Endothelial cell of umbilical vein (primary cell): ENCODE measurements at regions of chr11 and their contacts with region 1.

Region 1: DNA sequence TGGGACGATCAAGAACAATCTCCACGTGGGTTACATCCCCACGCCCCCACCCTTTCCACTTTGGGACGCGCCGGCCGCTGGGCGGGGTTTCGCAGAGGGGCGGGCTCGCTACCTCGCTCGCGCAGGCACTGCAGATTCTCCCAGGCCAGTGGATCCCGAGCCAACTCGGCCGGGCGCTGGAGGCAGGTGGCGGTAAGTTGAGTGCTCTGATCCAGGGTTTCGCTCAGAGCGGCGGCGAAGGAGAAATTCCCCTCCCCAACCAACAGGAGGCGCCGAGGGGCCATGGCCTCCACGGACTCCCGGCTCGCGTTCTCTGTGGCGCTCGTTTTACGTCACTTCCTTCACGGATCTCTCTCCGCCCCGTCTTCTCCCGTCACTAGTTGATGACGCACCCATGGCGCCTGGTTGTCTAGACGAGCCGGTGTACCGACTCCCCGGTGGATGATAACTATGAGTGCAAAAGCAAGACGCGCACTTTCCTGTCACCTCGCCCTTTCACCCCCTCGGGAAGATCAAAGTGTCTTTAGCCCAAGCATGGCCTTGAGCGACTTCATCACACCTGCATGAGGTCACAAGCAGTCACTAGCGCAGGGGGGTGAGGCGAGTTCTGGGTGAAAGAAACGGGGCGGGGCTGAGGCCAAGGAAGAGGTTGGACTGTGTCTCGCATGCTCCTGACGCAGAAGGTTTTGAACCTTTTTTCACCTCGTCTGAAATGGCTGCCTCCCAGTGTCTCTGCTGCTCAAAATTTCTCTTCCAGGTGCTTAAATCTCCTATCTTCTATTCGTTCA is at the starts of genes CFAP68 and FDXACB1:
- DNase-seq: peak; percentile 98
- H3K4me3 ChIP-seq: peak within 1 kb of the TSS; percentile 53 to 84 (median 62)
- H3K27ac ChIP-seq: peak within 1 kb of the TSS; percentile 93
- H3K4me1 ChIP-seq: peaks cover 21% of the 10 kb centered on the region
- H3K27me3 ChIP-seq: no peaks in the 10 kb centered on the region
- CTCF ChIP-seq: peak; percentile 97 to 98
- POLR2A ChIP-seq: peak; percentile 69
- total RNA-seq, gene CFAP68: 7.4 TPM in 2 replicates
- total RNA-seq, gene FDXACB1: 1.4 and 3.3 TPM in 2 replicates

Region 2: DNA sequence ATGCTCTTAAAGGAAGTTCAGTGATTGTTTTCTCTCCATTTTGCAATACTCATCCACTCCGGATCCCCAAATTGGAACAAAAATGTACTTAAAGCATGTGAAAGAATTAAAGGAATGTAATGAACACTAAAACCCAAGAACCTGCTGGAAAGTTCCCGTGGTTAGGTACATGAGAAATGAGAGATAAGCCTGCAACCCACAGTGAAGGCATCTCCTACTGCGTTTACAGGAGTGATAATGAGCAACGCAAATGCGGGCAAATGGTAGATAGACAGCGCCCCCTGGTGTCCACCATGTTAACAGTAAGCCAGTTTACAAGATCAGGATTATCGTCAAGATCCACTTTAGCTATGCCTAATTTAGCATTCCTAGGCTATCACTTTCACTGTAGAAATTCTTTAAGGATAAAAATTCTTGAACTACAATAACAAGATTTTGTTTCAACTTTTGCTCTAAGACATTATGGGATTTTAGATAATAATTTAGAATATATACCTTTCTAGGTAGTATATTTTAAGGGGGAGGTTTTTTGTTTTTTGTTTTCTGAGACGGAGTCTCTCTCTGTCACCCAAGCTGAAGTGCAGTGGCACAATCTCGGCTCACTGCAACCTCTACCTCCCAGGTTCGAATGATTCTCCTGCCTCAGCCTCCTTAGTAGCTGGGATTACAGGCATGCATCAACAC is 37.5 kb before region 1 on chr11:
- CTCF ChIA-PET with region 1: no interaction called
- POLR2A ChIA-PET with region 1: no interaction called
- dilution Hi-C with region 1: no loop called
- intact Hi-C with region 1: no loop called
- DNase-seq: peak; percentile 86
- H3K4me3 ChIP-seq: no peak overlapping the region
- H3K27ac ChIP-seq: no peak overlapping the region
- H3K4me1 ChIP-seq: peaks cover 10% of the 10 kb centered on the region
- H3K27me3 ChIP-seq: no peaks in the 10 kb centered on the region
- CTCF ChIP-seq: peak; percentile 76 to 84
- POLR2A ChIP-seq: no peak

Region 3: DNA sequence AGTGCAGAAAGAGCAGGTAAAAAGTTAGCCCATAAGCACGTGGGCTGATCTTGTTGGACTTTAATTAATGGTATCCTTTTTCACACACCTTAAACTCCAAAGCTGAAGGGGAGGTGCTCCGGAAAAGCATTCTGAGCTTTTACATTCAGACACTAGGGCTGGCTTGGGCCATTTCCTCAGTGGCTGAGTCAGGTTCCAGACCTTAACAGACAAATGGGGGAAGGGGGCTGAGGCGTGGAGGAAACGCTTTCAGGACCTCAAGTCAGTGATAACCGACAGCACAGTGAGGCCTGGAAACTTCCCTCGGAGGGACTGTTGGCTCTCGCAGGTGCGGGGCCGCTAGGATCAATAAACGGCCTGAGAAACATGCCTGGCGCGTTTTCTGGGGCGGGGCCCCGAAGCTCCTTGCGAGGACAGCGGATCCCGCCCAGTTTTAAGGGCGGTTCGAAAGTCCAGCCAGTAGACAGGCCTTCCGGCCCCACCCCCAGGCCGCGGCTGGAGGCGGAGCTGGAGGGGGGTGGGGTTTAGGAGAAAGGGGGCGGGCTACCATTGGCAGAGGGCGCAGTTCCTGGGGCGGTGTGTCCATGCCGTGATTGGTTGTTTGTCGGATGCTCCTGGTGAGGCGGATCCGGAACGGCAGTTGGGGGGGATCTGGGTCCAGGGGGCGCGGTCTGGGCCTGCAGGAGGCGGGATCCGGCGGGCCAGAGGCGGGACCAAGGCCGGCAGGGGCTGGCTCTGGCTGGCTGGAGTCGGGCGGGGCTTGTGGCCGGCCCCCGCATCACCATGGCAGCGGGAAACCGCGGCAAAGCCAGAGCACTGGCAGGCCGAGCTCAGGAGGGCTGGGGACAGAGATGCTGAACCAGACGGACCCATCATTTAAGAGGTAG is 47.7 kb after region 1 on chr11:
- CTCF ChIA-PET with region 1: interaction called, 8 read pairs
- POLR2A ChIA-PET with region 1: no interaction called
- dilution Hi-C with region 1: no loop called
- intact Hi-C with region 1: loop called (anchors 1 kb)
- DNase-seq: peak; percentile 98
- H3K4me3 ChIP-seq: peak overlapping the region; percentile 38 to 66 (median 38)
- H3K27ac ChIP-seq: peak overlapping the region; percentile 98
- H3K4me1 ChIP-seq: peaks cover 28% of the 10 kb centered on the region
- H3K27me3 ChIP-seq: no peaks in the 10 kb centered on the region
- CTCF ChIP-seq: peak in 1 of 2 donors; percentile 20
- POLR2A ChIP-seq: peak; percentile 88

Region 4: GRCh38 chr11:111944651-111945051 is 65.6 kb after region 1 on chr11:
- CTCF ChIA-PET with region 1: no interaction called
- POLR2A ChIA-PET with region 1: no interaction called
- dilution Hi-C with region 1: no loop called
- intact Hi-C with region 1: loop called (anchors 1 kb)
- DNase-seq: peak; percentile 96
- H3K4me3 ChIP-seq: no peak overlapping the region
- H3K27ac ChIP-seq: peak overlapping the region; percentile 89
- H3K4me1 ChIP-seq: peaks cover 48% of the 10 kb centered on the region
- H3K27me3 ChIP-seq: no peaks in the 10 kb centered on the region
- CTCF ChIP-seq: no peak
- POLR2A ChIP-seq: no peak

Region 5: GRCh38 chr11:111996129-111996528 is 117.1 kb after region 1 on chr11:
- CTCF ChIA-PET with region 1: interaction called, 3 read pairs
- POLR2A ChIA-PET with region 1: no interaction called
- dilution Hi-C with region 1: no loop called
- intact Hi-C with region 1: loop called (anchors 1 kb)
- DNase-seq: no peak
- H3K4me3 ChIP-seq: no peak overlapping the region
- H3K27ac ChIP-seq: no peak overlapping the region
- H3K4me1 ChIP-seq: no peaks in the 10 kb centered on the region
- H3K27me3 ChIP-seq: no peaks in the 10 kb centered on the region
- CTCF ChIP-seq: no peak
- POLR2A ChIP-seq: no peak

Region 6: GRCh38 chr11:112074026-112074811 is 195.2 kb after region 1 on chr11 and contains the start of gene NKAPD1:
- CTCF ChIA-PET with region 1: no interaction called
- POLR2A ChIA-PET with region 1: no interaction called
- dilution Hi-C with region 1: no loop called
- intact Hi-C with region 1: loop called (anchors 1 kb)
- DNase-seq: peak; percentile 93
- H3K4me3 ChIP-seq: peak within 1 kb of the TSS; percentile 68 to 79 (median 71)
- H3K27ac ChIP-seq: peak within 1 kb of the TSS; percentile 69
- H3K4me1 ChIP-seq: peaks cover 10% of the 10 kb centered on the region
- H3K27me3 ChIP-seq: no peaks in the 10 kb centered on the region
- CTCF ChIP-seq: no peak
- POLR2A ChIP-seq: peak; percentile 45
- total RNA-seq, gene NKAPD1: 16.7 and 18.5 TPM in 2 replicates

Region 7: GRCh38 chr11:112174789-112175598 is 296.0 kb after region 1 on chr11 and contains the start of gene BCO2:
- CTCF ChIA-PET with region 1: no interaction called
- POLR2A ChIA-PET with region 1: no interaction called
- dilution Hi-C with region 1: no loop called
- intact Hi-C with region 1: loop called (anchors 2 kb)
- DNase-seq: peak; percentile 82
- H3K4me3 ChIP-seq: peak within 1 kb of the TSS; percentile 17 to 68 (median 37)
- H3K27ac ChIP-seq: peak within 1 kb of the TSS; percentile 69
- H3K4me1 ChIP-seq: peaks cover 16% of the 10 kb centered on the region
- H3K27me3 ChIP-seq: peaks cover 4 to 6% of the 10 kb centered on the region in 2 experiments
- CTCF ChIP-seq: peak; percentile 73 to 82
- POLR2A ChIP-seq: no peak
- total RNA-seq, gene BCO2: 1.4 and 1.9 TPM in 2 replicates

Region 8: GRCh38 chr11:112280268-112281126 is 401.5 kb after region 1 on chr11:
- CTCF ChIA-PET with region 1: no interaction called
- POLR2A ChIA-PET with region 1: no interaction called
- dilution Hi-C with region 1: no loop called
- intact Hi-C with region 1: loop called (anchors 1 kb)
- DNase-seq: peak; percentile 79
- H3K4me3 ChIP-seq: peak overlapping the region; percentile 33 to 39 (median 38)
- H3K27ac ChIP-seq: no peak overlapping the region
- H3K4me1 ChIP-seq: peaks cover 6% of the 10 kb centered on the region
- H3K27me3 ChIP-seq: peaks cover 4 to 5% of the 10 kb centered on the region in 2 experiments
- CTCF ChIP-seq: peak; percentile 71 to 79
- POLR2A ChIP-seq: no peak